Dendritic cell treated with granulocyte-macrophage colony-stimulating factor and Interleukin-4, amounts not matched to agents 40 ng/mL and 50 ng/mL, for 4 days (primary cell): ENCODE measurements at regions of chr5 and their contacts with region 1.

Region 1: GRCh38 chr5:154647114-154647760 is 107.9 kb upstream of the LARP1 start:
- H3K4me3 Mint-ChIP-seq: peak overlapping the region; percentile 79
- H3K27ac Mint-ChIP-seq: peak overlapping the region; percentile 19
- H3K4me1 Mint-ChIP-seq: peaks cover 26% of the 10 kb centered on the region
- H3K27me3 Mint-ChIP-seq: peaks cover 32% of the 10 kb centered on the region

Region 2: DNA sequence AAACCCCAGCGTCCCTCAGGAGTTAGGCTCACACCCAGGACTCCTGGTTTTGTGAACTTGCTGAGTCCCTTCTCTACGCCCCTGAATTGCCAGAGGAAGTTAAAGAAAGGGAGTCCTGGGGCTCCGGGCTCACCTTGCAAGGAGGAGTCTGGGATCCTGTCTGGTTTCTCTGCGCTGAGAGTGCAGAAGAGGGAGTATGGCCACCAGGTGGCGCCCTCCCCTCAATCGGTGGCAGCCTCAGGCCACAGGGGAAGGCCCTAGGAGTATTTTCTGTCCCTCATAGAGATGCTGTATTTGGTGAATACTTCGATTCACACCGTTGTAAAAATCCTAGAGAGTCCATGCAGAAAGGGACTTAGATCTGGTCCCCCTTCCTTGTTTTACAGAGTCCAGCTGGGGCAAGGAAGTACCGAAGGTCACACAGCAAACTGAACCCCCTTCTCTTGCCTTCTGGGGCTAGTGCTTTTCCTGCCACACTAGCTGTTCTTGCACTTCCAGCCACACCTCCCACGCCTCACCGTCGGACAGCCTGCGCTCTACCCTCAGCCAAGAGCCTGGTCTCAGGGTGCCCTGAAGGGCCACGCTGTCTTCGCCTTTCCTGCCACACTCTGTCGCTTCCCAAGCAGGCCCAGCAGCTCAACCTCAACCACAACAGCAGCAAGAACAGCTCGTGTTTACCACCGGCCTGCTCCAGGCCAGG is 179.4 kb before region 1 on chr5:
- intact Hi-C with region 1: loop called (anchors 10 kb)
- H3K4me3 Mint-ChIP-seq: no peak overlapping the region
- H3K27ac Mint-ChIP-seq: no peak overlapping the region
- H3K4me1 Mint-ChIP-seq: no peaks in the 10 kb centered on the region
- H3K27me3 Mint-ChIP-seq: peaks cover 39% of the 10 kb centered on the region

Region 3: GRCh38 chr5:154630410-154630809 is 16.8 kb before region 1 on chr5:
- intact Hi-C with region 1: no loop called
- H3K4me3 Mint-ChIP-seq: no peak overlapping the region
- H3K27ac Mint-ChIP-seq: no peak overlapping the region
- H3K4me1 Mint-ChIP-seq: no peaks in the 10 kb centered on the region
- H3K27me3 Mint-ChIP-seq: peaks cover 4% of the 10 kb centered on the region

Region 4: DNA sequence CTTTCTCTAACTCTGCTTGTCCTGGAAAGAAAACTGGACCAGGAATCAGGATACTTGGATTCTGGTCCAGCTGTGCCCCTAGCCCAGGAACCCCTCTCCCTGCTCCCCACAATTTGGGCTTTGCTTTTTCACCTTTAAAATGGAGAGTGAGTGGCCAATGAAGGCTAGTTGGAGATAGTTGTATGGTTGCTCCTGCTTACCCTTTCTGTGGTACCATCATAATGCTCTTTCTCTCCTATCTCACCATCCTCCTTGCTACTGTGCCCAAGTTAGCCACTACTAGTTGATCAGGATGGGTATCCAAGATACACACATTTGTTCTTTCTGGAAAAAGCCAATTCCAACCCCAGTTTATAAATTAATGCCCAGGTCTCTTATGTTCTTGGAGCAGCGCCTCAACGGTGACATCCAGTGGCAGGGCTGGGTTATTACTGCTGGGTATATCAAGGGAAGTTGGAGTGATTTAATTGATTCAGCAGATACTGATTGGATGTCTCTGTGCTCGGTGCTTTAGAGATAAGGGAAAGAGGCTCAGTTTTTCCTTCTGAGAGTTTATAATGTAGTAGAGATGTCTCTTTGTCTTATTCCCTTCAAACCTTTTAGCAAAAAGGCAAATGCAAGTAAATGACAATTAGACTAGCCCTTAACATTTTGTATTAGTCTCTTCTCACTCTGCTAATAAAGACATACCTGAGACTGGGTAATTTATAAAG is 164.6 kb after region 1 on chr5:
- intact Hi-C with region 1: loop called (anchors 1 kb)
- H3K4me3 Mint-ChIP-seq: no peak overlapping the region
- H3K27ac Mint-ChIP-seq: peak overlapping the region; percentile 69
- H3K4me1 Mint-ChIP-seq: peaks cover 24% of the 10 kb centered on the region
- H3K27me3 Mint-ChIP-seq: no peaks in the 10 kb centered on the region

Region 5: GRCh38 chr5:155004138-155004744 is 357.0 kb after region 1 on chr5:
- intact Hi-C with region 1: loop called (anchors 10 kb)
- H3K4me3 Mint-ChIP-seq: no peak overlapping the region
- H3K27ac Mint-ChIP-seq: no peak overlapping the region
- H3K4me1 Mint-ChIP-seq: no peaks in the 10 kb centered on the region
- H3K27me3 Mint-ChIP-seq: peaks cover 7% of the 10 kb centered on the region